ENCODE measurements at regions of chr5 and their contacts with region 1.

Region 1: GRCh38 chr5:138575194-138576015 is at the start of gene HSPA9:
- DNase-seq: peak; percentile 98
- H3K4me3 ChIP-seq: peak within 1 kb of the TSS; percentile 75 to 86
- H3K27ac ChIP-seq: peak within 1 kb of the TSS; percentile 97 to 98
- H3K4me1 ChIP-seq: peaks cover 2 to 10% of the 10 kb centered on the region in 2 experiments; a peak in 2 of 4 replicates
- H3K27me3 ChIP-seq: no peaks in the 10 kb centered on the region
- CTCF ChIP-seq: no peak
- EP300 ChIP-seq: 0 out of 4 replicates have a peak, but pooled peaks of 1 of the 2 experiments have one; percentile 13
- RAD21 ChIP-seq: no peak
- polyA plus RNA-seq, gene HSPA9: 153 and 196 TPM in 2 replicates

Region 2: DNA sequence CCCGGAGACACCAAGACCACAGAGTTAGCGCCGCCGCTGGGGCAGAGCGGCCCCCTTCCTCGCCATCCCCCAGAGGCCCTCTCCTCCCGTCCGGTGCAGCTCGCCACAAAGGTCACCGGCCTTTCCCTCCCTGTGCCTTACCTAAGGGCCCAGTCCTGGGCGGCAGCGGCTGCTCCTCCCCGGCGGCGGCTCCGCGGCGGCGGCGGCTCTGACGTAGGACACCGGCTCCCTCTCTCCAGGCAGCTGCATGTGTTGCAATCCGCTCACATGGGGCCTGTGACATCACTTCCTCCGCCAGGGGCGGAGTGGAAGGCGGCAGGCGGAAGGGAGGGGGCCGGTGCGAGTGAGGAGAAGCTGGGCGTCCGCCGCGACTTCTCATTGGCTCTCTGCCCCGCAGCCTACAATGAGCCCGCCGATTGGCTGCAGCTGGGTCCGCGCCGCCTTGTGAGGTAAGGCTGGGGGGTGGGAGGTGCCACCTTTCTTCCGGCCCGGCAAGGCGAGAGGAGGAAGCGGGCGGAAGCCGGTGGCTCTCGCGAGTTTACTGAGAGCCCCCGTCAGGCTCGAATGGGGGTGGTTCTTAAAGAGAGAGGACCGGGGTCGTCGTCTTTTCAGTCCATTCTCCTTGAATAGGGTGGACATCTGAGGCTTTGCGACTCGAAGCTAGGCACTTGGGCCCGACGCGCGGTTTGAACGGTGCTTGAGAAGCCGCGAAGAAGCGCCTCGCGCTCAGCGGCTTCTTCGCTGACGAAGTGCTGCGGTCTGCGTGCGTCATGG is 32.3 kb before region 1 on chr5 and contains the start of gene ETF1:
- CTCF ChIA-PET with region 1: interaction called, 7 read pairs
- POLR2A ChIA-PET with region 1: interaction called, 20 read pairs
- DNase-seq: peak; percentile 97
- H3K4me3 ChIP-seq: peak within 1 kb of the TSS; percentile 88 to 91
- H3K27ac ChIP-seq: peak within 1 kb of the TSS; percentile 96 to 97
- H3K4me1 ChIP-seq: peaks cover 18 to 25% of the 10 kb centered on the region in 2 experiments
- H3K27me3 ChIP-seq: no peaks in the 10 kb centered on the region
- CTCF ChIP-seq: no peak
- EP300 ChIP-seq: peak in 1 of 2 experiments; percentile 28; a peak in 1 of 4 replicates
- RAD21 ChIP-seq: no peak
- polyA plus RNA-seq, gene ETF1: 36.7 and 48.7 TPM in 2 replicates

Region 3: GRCh38 chr5:138601444-138601843 is 26.0 kb after region 1 on chr5:
- CTCF ChIA-PET with region 1: interaction called, 46 read pairs
- POLR2A ChIA-PET with region 1: interaction called, 3 read pairs
- DNase-seq: no peak
- H3K4me3 ChIP-seq: no peak overlapping the region
- H3K27ac ChIP-seq: no peak overlapping the region
- H3K4me1 ChIP-seq: peaks cover 0 to 38% of the 10 kb centered on the region in 2 experiments; a peak in 1 of 4 replicates
- H3K27me3 ChIP-seq: peaks cover 7% of the 10 kb centered on the region; the same call in 1 of the 2 replicates
- CTCF ChIP-seq: no peak
- EP300 ChIP-seq: no peak
- RAD21 ChIP-seq: no peak

Region 4: GRCh38 chr5:138632900-138633489 is 57.6 kb after region 1 on chr5:
- CTCF ChIA-PET with region 1: interaction called, 12 read pairs
- POLR2A ChIA-PET with region 1: no interaction called
- DNase-seq: peak; percentile 69
- H3K4me3 ChIP-seq: no peak overlapping the region
- H3K27ac ChIP-seq: no peak overlapping the region
- H3K4me1 ChIP-seq: peaks cover 0 to 14% of the 10 kb centered on the region in 2 experiments; a peak in 1 of 4 replicates
- H3K27me3 ChIP-seq: no peaks in the 10 kb centered on the region
- CTCF ChIP-seq: peak; percentile 47
- EP300 ChIP-seq: no peak
- RAD21 ChIP-seq: peak; percentile 53

Region 5: DNA sequence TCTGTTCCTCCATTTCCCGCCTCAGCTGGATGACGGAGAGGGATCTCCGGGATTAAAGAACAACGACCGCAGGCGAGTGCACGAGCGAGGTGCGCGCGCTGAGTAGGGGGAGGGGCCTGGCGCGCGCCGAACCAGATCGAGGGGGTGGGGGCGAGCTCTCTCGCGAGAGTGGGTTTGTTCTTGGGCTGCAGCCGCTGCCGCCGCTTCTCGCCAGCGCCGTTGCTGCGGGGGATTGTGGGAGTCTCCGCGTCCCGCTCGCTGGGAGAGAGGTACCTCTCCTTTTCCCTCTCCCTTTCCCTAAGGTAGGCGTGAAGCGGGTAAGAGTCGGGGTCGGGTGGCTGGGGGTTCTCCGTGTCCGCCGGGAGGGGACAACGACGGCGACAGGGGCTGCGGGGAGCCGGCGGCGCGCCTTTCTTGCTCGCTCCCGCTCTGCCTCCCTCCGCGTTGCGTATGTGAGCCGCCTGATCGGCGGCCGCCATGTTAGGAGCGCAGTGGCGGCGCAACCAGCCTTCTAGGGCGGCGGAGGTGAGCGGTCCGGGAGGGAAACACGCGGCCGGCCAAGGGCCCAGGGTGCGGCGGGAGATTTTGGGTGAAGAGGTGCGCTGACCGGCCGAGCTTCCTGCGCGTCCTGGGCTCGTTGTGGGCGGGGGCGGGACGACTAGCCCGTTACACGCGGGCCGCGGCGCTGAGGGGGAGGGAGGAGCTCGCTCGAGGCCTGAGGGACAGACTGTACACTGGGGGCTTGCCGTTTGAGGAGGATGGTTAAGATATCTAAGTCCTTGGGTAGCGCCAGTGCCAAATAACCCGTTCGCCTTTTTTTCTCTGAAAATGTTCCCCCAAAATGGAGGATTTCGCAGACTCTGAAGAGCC is 718.3 kb after region 1 on chr5 and contains the start of gene MATR3:
- CTCF ChIA-PET with region 1: interaction called, 3 read pairs
- POLR2A ChIA-PET with region 1: interaction called, 12 read pairs
- DNase-seq: peak; percentile 97
- H3K4me3 ChIP-seq: peak within 1 kb of the TSS; percentile 73 to 85
- H3K27ac ChIP-seq: peak within 1 kb of the TSS; percentile 97 to 99
- H3K4me1 ChIP-seq: peaks cover 10 to 20% of the 10 kb centered on the region in 2 experiments; a peak in 3 of 4 replicates
- H3K27me3 ChIP-seq: no peaks in the 10 kb centered on the region
- CTCF ChIP-seq: no peak
- EP300 ChIP-seq: no peak
- RAD21 ChIP-seq: no peak
- polyA plus RNA-seq, gene MATR3: 40.4 and 63.6 TPM in 2 replicates

Measured in SK-N-SH (cell line).